ENCODE measurements at regions of chrX and their contacts with region 1.

Region 1: DNA sequence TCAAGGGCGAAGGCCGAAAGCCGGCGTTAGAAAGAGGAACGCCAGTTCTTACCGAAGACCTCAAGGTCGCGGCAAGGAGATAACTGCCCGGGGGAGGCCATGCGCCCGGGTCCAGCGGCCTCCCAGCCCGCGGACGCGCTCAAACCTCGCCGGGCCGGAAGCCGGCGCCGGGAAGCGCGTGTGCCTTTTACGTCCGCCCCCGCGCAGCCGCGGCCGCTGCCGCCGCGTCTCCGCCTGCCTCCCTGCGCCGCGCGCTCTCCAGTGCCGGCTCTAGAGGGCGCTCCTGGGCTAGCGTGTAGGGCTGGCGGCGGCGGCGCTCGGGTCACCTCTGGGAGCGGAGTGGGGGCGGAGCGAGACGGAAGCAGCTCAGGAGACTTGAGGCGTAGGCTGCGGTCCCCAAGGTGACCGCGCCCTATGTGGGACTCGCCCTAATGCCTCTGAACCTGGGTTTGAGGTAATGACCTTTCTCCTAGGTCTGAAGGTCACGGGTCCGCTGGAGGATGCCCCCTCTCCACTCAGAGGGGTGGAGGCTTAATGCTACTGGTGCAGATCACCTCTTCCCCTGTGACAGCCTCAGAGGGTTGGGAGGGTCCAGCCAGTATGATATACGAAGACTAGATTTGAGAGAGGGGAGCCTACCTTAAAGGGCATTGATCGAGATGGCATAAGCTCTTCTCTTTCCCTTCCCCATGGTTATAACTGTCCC is 839 bp downstream of the SLC25A5 start:
- DNase-seq: peak; percentile 86
- H3K4me3 ChIP-seq: peak overlapping the region; percentile 84
- H3K27ac ChIP-seq: peak overlapping the region; percentile 89
- H3K4me1 ChIP-seq: no peaks in the 10 kb centered on the region
- H3K27me3 ChIP-seq: no peaks in the 10 kb centered on the region
- CTCF ChIP-seq: peak; percentile 62

Region 2: GRCh38 chrX:118928151-118928550 is 540.9 kb before region 1 on chrX:
- CTCF ChIA-PET with region 1: no interaction called
- POLR2A ChIA-PET with region 1: no interaction called
- intact Hi-C with region 1: no loop called
- DNase-seq: no peak
- H3K4me3 ChIP-seq: no peak overlapping the region
- H3K27ac ChIP-seq: no peak overlapping the region
- H3K4me1 ChIP-seq: no peaks in the 10 kb centered on the region
- H3K27me3 ChIP-seq: no peaks in the 10 kb centered on the region
- CTCF ChIP-seq: no peak

Region 3: GRCh38 chrX:119410854-119411253 is 58.2 kb before region 1 on chrX:
- CTCF ChIA-PET with region 1: no interaction called
- POLR2A ChIA-PET with region 1: interaction called, 10 read pairs
- intact Hi-C with region 1: no loop called
- DNase-seq: no peak
- H3K4me3 ChIP-seq: no peak overlapping the region
- H3K27ac ChIP-seq: no peak overlapping the region
- H3K4me1 ChIP-seq: no peaks in the 10 kb centered on the region
- H3K27me3 ChIP-seq: no peaks in the 10 kb centered on the region
- CTCF ChIP-seq: no peak

Region 4: GRCh38 chrX:119421016-119421705 is 47.9 kb before region 1 on chrX:
- CTCF ChIA-PET with region 1: no interaction called
- POLR2A ChIA-PET with region 1: no interaction called
- intact Hi-C with region 1: no loop called
- DNase-seq: no peak
- H3K4me3 ChIP-seq: no peak overlapping the region
- H3K27ac ChIP-seq: no peak overlapping the region
- H3K4me1 ChIP-seq: no peaks in the 10 kb centered on the region
- H3K27me3 ChIP-seq: no peaks in the 10 kb centered on the region
- CTCF ChIP-seq: no peak

Region 5: GRCh38 chrX:119606280-119607015 is 137.4 kb after region 1 on chrX and contains the start of gene NKRF:
- CTCF ChIA-PET with region 1: interaction called, 11 read pairs
- POLR2A ChIA-PET with region 1: no interaction called
- intact Hi-C with region 1: no loop called
- DNase-seq: peak; percentile 95
- H3K4me3 ChIP-seq: peak within 1 kb of the TSS; percentile 69
- H3K27ac ChIP-seq: peak within 1 kb of the TSS; percentile 94
- H3K4me1 ChIP-seq: no peaks in the 10 kb centered on the region
- H3K27me3 ChIP-seq: no peaks in the 10 kb centered on the region
- CTCF ChIP-seq: no peak
- total RNA-seq, gene NKRF: 18.8 and 22.1 TPM in 2 replicates

Region 6: DNA sequence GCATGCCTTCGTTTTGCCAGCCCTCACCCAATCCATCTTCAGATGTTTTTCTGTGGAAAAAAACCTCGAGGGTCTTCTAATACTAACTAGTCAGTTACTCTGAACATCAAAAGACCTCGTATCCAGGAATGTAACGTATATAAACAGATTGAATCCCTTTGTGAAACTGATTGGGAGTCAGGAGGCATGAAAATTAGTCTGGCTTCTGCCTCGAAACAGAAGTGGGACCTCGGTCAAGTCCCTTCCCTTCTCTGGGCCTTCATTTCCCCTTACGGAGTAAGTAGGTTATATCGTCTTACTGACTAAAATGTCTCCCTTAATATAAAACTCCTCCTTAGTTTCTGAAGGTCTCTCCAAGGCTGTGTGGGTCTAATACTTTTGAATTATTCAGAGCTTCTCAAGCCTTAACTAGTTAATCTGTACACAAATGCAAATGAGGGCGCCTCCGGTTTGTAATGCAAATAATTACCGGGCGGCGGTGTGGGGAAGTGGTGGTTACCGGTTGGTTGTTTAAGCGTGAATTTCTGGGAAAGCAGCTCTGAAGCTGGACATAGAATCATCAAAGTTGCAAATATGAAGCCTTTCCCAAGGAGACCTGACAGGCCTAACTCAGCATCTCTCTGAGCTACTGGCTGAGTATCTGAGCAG is 148.6 kb after region 1 on chrX:
- CTCF ChIA-PET with region 1: no interaction called
- POLR2A ChIA-PET with region 1: no interaction called
- intact Hi-C with region 1: no loop called
- DNase-seq: peak; percentile 40
- H3K4me3 ChIP-seq: no peak overlapping the region
- H3K27ac ChIP-seq: no peak overlapping the region
- H3K4me1 ChIP-seq: peaks cover 9% of the 10 kb centered on the region
- H3K27me3 ChIP-seq: no peaks in the 10 kb centered on the region
- CTCF ChIP-seq: no peak